ENCODE measurements at regions of chr14 and their contacts with region 1.

Region 1: DNA sequence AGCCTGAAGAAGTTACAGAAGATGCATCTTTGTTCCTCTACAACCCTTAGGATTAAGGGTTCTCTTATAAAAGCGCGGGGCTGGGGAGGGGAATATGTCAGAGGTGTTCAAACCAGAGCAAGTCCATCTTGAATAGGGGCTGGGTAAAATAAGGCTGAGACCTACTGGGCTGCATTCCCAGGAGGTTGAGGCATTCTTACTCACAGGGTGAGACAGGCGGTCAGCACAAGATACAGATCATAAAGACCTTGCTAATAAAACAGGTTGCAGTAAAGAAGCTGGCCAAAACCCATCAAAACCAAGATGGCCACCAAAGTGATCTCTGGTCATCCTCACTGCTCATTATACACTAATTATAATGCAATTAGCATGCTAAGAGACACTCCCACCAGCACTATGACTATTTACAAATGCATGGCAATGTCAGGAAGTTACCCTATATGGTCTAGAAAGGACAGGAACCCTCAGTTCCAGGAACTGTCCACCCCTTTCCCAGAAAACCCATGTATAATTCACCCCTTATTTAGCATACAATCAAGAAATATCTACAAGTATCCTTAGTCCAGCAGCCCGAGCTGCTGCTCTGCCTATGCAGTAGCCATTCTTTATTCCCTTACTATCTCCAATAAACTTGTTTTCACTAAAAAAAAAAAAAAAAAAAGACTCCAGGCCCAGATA is 108.1 kb upstream of the FOXN3 start:
- DNase-seq: no peak
- H3K4me3 ChIP-seq: no peak overlapping the region
- H3K27ac ChIP-seq: no peak overlapping the region
- H3K4me1 ChIP-seq: no peaks in the 10 kb centered on the region
- H3K27me3 ChIP-seq: no peaks in the 10 kb centered on the region
- CTCF ChIP-seq: no peak
- EP300 ChIP-seq: no peak
- POLR2A ChIP-seq: no peak

Region 2: GRCh38 chr14:89730687-89731086 is 205.6 kb after region 1 on chr14:
- intact Hi-C with region 1: loop called in 1 of 4 experiments (anchors 5 kb)
- DNase-seq: no peak
- H3K4me3 ChIP-seq: no peak overlapping the region
- H3K27ac ChIP-seq: no peak overlapping the region
- H3K4me1 ChIP-seq: no peaks in the 10 kb centered on the region
- H3K27me3 ChIP-seq: no peaks in the 10 kb centered on the region
- CTCF ChIP-seq: no peak
- EP300 ChIP-seq: no peak
- POLR2A ChIP-seq: no peak

Region 3: DNA sequence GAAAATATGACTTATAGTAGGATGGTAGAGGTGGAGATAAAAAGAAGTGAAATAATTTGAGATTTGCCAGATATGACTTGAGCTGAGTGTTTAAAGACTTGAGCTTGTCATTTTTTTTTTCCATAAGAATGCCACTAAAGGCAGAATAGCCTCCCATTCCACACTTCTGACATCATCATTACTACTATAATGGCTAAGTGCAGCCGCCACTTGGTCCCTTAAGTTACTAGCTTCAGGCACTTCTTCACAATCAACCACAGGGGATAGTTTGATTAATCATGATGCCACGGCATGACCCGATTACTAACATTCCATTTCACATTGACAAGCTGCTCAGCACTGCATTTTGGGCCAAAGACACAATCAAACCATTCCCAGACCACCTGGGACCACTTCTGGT is 301.5 kb after region 1 on chr14:
- intact Hi-C with region 1: no loop called
- DNase-seq: no peak
- H3K4me3 ChIP-seq: no peak overlapping the region
- H3K27ac ChIP-seq: no peak overlapping the region
- H3K4me1 ChIP-seq: no peaks in the 10 kb centered on the region
- H3K27me3 ChIP-seq: no peaks in the 10 kb centered on the region
- CTCF ChIP-seq: no peak
- EP300 ChIP-seq: no peak
- POLR2A ChIP-seq: no peak